Heart right ventricle (tissue), 16 donors: ENCODE measurements at regions of chr14 and their contacts with region 1.

Region 1: DNA sequence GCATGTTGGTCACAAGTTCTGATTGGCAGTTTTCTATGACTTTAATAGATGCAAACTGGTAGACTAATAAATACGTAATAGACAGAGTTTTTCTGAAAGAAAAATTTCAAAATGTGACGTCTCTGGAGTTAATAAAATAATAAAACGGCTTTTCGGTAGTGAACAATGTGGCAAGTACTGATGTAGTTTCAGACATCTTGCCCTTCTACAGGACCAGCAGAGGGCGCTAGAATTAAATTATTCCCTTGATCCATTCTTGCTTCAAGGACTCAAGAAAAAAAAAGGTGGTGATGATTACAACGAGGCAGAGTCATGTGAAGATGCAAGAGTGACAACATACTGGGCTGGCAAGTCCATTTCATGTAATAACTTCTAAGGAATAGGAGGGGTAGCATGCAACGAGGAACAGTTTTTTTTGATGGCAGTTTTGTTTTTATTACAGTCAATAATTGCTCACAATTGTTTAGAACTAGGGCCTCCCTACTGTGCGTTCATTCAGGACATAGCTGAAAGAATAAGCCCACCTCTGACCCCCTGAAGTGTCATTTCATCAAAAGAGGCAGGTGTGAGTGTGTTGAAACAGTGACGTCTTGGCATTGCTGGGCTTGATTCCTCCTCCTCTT is 101.0 kb upstream of the GZMB start:
- DNase-seq: peak in 1 of 2 donors; percentile 66
- ATAC-seq: peak in 6 of 8 donors; percentile 42 to 83 (median 72)
- H3K4me3 ChIP-seq: no peak overlapping the region
- H3K27ac ChIP-seq: no peak overlapping the region
- H3K4me1 ChIP-seq: peaks cover 0 to 5% (median 0%) of the 10 kb centered on the region in 9 donors
- H3K27me3 ChIP-seq: no peaks in the 10 kb centered on the region
- CTCF ChIP-seq: peak; percentile 58 to 91 (median 80)

Region 2: DNA sequence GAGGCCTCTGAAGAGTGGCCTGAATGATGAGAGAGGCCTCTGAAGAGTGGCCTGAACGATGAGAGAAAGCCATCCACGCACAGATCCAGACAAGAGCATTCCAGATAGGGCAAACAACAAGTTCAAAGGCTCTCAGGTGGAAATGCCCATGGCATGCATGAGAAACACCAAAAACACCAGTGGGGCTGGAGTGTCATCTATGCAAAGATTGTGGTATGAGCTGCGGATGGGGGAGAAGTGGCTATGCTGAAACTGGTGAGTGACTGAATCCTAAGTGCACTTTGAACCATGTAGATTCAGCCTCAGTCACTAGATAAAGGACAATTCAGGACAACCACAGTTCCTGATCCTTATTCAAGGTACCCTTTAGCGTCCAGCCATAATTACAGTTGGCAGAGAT is 21.6 kb before region 1 on chr14:
- intact Hi-C with region 1: no loop called
- DNase-seq: no peak
- ATAC-seq: no peak
- H3K4me3 ChIP-seq: no peak overlapping the region
- H3K27ac ChIP-seq: no peak overlapping the region
- H3K4me1 ChIP-seq: peaks cover 0 to 5% (median 0%) of the 10 kb centered on the region in 9 donors
- H3K27me3 ChIP-seq: peaks cover 0 to 10% (median 0%) of the 10 kb centered on the region in 7 donors
- CTCF ChIP-seq: no peak

Region 3: DNA sequence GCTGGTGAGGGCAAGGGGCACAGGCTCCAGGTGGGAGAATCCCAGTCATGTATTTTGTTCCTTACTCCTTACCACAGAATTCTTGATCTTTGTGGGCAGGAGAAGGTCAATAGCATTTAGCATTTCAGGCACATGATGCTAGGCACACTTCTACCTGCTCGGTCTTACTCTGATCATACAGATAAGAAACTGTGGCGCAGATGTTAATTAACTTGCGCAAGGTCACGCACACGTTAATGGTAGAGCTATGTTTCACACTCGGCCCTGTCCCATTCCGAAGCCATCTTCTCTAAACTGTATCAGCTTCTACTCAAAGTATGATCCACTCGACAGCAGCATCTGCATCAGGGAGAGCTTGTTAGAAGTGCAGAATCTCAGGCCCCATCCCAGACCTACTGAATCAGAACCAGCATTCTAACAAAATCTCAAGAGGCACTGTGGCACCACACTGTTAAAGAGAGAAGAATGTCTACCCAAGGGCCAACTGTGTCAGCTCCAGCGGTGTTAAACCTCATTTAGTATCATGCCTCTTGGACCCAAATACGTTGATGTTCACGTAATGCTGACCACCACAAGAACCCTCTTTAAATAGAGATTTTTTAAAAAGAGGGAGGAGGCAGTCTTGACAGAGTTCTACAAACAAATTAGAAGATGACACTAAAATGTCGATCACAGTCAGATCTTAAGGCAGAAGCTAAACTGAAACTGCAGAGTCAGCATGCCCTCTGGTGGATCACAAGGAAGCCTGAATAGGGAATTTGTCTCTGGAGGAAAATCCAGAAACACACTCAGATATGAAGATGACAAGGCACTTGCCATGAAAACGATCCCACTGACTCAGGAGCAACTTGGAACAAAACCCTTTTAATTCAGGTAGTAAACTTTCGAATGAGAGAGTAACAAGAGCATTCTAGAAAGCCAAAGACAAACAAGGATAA is 307.6 kb after region 1 on chr14:
- intact Hi-C with region 1: loop called in 8 of 10 experiments (anchors 2 to 10 kb)
- DNase-seq: peak in 1 of 2 donors; percentile 50
- ATAC-seq: peak in 6 of 8 donors; percentile 23 to 60 (median 49)
- H3K4me3 ChIP-seq: peak overlapping the region in 2 of 10 donors; percentile 16 to 26
- H3K27ac ChIP-seq: peak overlapping the region in 3 of 10 donors; percentile 2 to 52 (median 11)
- H3K4me1 ChIP-seq: peaks cover 0 to 52% (median 31%) of the 10 kb centered on the region in 9 donors
- H3K27me3 ChIP-seq: peaks cover 0 to 2% (median 0%) of the 10 kb centered on the region in 7 donors
- CTCF ChIP-seq: peak in 8 of 9 donors; percentile 44 to 72 (median 60)

Region 4: GRCh38 chr14:25132732-25133422 is 397.9 kb after region 1 on chr14:
- intact Hi-C with region 1: loop called in 6 of 10 experiments (anchors 1 to 5 kb)
- DNase-seq: peak; percentile 44 to 51
- ATAC-seq: peak; percentile 92 to 97 (median 96)
- H3K4me3 ChIP-seq: peak overlapping the region in 3 of 10 donors; percentile 6 to 9 (median 8)
- H3K27ac ChIP-seq: no peak overlapping the region
- H3K4me1 ChIP-seq: peaks cover 0 to 9% (median 0%) of the 10 kb centered on the region in 9 donors
- H3K27me3 ChIP-seq: peaks cover 0 to 34% (median 11%) of the 10 kb centered on the region in 7 donors
- CTCF ChIP-seq: peak; percentile 77 to 93 (median 87)

Region 5: GRCh38 chr14:25150934-25151790 is 416.2 kb after region 1 on chr14:
- intact Hi-C with region 1: loop called (anchors 1 to 10 kb)
- DNase-seq: no peak
- ATAC-seq: no peak
- H3K4me3 ChIP-seq: no peak overlapping the region
- H3K27ac ChIP-seq: no peak overlapping the region
- H3K4me1 ChIP-seq: peaks cover 0 to 4% (median 0%) of the 10 kb centered on the region in 9 donors
- H3K27me3 ChIP-seq: peaks cover 0 to 6% (median 0%) of the 10 kb centered on the region in 7 donors
- CTCF ChIP-seq: peak; percentile 54 to 90 (median 83)

Region 6: DNA sequence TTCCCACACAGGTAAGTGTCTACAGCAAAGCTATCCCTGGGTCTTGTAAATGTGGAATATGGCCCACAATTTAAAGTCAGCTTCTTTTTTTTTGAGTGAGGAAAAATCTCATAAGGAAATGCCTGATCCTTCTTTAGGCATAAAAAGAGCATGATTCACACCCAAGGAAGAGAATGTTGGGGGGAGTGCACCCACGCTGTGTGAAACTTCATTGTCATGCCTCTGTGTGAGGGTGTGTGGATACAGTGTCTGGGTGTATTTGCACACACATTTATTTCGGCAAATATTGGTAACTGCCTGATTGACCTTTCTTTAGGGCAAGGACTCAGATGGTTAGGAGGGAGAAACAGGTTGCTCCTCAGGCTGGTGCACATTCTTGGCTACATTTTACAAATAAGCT is 511.8 kb after region 1 on chr14:
- intact Hi-C with region 1: loop called in 1 of 10 experiments (anchors 10 kb)
- DNase-seq: no peak
- ATAC-seq: no peak
- H3K4me3 ChIP-seq: no peak overlapping the region
- H3K27ac ChIP-seq: no peak overlapping the region
- H3K4me1 ChIP-seq: no peaks in the 10 kb centered on the region
- H3K27me3 ChIP-seq: peaks cover 0 to 16% (median 0%) of the 10 kb centered on the region in 7 donors
- CTCF ChIP-seq: no peak